ENCODE measurements at regions of chr11 and their contacts with region 1.

Region 1: DNA sequence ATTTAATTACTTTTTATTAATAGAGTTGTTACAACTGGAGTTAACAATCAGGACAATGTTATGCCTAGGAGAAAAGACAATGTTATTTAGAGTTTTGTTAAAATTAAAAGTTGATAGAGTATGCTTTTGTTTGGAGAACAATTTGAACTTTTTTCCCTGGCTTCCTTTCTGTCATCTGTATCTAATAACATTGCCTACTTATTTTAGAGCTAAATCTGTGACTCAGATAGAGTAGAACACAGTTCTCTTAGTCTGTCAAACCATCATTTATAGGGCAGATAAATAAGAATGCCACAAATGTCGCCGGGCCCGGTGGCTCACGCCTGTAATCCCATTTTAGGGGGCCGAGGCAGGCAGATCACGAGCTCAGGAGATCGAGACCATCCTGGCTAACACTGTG is 28.9 kb upstream of the YAP1 start:
- DNase-seq: no peak
- H3K4me3 ChIP-seq: no peak overlapping the region
- H3K27ac ChIP-seq: no peak overlapping the region
- H3K27me3 ChIP-seq: no peaks in the 10 kb centered on the region
- CTCF ChIP-seq: no peak

Region 2: GRCh38 chr11:101996111-101996510 is 85.2 kb before region 1 on chr11:
- CTCF ChIA-PET with region 1: no interaction called
- POLR2A ChIA-PET with region 1: no interaction called
- DNase-seq: no peak
- H3K4me3 ChIP-seq: no peak overlapping the region
- H3K27ac ChIP-seq: no peak overlapping the region
- H3K27me3 ChIP-seq: no peaks in the 10 kb centered on the region
- CTCF ChIP-seq: no peak

Region 3: GRCh38 chr11:102138223-102138622 is 56.9 kb after region 1 on chr11:
- CTCF ChIA-PET with region 1: no interaction called
- POLR2A ChIA-PET with region 1: interaction called, 11 read pairs
- DNase-seq: no peak
- H3K4me3 ChIP-seq: no peak overlapping the region; the same call in 1 of the 2 replicates
- H3K27ac ChIP-seq: peak overlapping the region; percentile 96
- H3K27me3 ChIP-seq: no peaks in the 10 kb centered on the region
- CTCF ChIP-seq: no peak

Measured in AG04450 (cell line).